Activated CD4-positive, alpha-beta memory T cell treated with anti-CD3 and anti-CD28 coated beads for 36 hours (primary cell): ENCODE measurements at regions of chr6 and their contacts with region 1.

Region 1: DNA sequence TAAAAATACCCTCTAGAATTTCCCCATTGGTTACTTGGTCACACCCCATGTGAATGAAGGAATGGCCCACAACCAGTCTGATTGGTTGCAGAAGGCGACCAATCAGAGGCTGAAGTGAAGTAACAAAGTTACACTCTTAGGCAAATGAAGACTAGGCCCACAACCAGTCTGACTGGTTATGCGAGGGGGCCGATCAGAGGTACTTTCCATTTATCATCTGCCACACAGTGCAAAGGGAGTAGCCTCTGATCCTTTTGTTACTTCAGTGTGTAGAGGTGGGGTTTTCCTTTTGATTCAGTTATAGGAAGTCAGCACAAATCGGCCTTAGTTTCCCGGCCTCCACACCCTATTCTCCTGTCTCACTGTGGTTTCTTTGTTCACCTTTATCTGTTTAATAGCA is 61.2 kb upstream of the SGK1 start:
- DNase-seq: peak; percentile 81
- H3K4me3 Mint-ChIP-seq: peak overlapping the region; percentile 27
- H3K27ac Mint-ChIP-seq: peak overlapping the region; percentile 83
- H3K4me1 Mint-ChIP-seq: peaks cover 32% of the 10 kb centered on the region
- H3K27me3 Mint-ChIP-seq: no peaks in the 10 kb centered on the region

Region 2: GRCh38 chr6:134398453-134398852 is 19.4 kb after region 1 on chr6:
- CTCF ChIA-PET with region 1: interaction called, 3 read pairs
- POLR2A ChIA-PET with region 1: no interaction called
- intact Hi-C with region 1: loop called (anchors 1 kb)
- DNase-seq: peak; percentile 49
- H3K4me3 Mint-ChIP-seq: no peak overlapping the region
- H3K27ac Mint-ChIP-seq: no peak overlapping the region
- H3K4me1 Mint-ChIP-seq: peaks cover 13% of the 10 kb centered on the region
- H3K27me3 Mint-ChIP-seq: no peaks in the 10 kb centered on the region

Region 3: DNA sequence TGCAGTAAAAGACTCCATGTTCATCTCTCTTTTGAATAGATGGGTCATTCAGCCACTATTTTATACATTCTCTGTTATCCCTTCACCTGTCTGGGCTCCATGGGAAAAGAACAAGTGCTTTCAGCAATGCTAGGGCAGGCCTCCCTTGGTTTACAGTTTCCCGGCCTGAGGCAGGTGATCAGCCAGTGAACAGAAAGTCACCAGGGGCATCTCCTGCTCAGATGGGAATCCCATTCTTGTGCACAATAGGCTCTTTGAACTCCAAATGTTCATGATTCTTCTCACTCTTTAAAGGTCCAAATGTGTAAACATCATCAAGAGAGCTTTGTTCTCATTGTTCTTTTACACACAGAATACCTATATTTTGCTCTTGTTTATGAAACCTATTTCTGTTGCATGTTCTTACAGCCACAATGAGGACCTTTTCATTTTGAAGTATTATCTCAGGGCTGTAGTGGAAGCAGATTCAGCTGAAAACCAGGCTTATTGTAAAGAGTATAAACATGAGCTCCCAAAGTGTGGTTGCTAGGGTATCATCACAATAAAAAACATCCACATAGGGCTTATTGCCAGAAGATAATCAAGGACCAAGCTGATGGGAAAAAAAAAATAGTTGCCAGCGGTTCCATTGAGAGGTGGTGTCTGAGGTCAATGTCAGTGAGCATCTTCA is 205.9 kb after region 1 on chr6:
- CTCF ChIA-PET with region 1: no interaction called
- POLR2A ChIA-PET with region 1: no interaction called
- intact Hi-C with region 1: no loop called
- DNase-seq: no peak
- H3K4me3 Mint-ChIP-seq: no peak overlapping the region
- H3K27ac Mint-ChIP-seq: no peak overlapping the region
- H3K4me1 Mint-ChIP-seq: peaks cover 2% of the 10 kb centered on the region
- H3K27me3 Mint-ChIP-seq: no peaks in the 10 kb centered on the region